ENCODE measurements at regions of chr20 and their contacts with region 1.

Region 1: GRCh38 chr20:10922941-10923340 is 249.1 kb upstream of the JAG1 start:
- DNase-seq: no peak
- ATAC-seq: no peak
- H3K4me3 ChIP-seq: no peak overlapping the region
- H3K27ac ChIP-seq: no peak overlapping the region
- H3K4me1 ChIP-seq: no peaks in the 10 kb centered on the region
- H3K27me3 ChIP-seq: no peaks in the 10 kb centered on the region
- CTCF ChIP-seq: no peak
- POLR2A ChIP-seq: no peak

Region 2: DNA sequence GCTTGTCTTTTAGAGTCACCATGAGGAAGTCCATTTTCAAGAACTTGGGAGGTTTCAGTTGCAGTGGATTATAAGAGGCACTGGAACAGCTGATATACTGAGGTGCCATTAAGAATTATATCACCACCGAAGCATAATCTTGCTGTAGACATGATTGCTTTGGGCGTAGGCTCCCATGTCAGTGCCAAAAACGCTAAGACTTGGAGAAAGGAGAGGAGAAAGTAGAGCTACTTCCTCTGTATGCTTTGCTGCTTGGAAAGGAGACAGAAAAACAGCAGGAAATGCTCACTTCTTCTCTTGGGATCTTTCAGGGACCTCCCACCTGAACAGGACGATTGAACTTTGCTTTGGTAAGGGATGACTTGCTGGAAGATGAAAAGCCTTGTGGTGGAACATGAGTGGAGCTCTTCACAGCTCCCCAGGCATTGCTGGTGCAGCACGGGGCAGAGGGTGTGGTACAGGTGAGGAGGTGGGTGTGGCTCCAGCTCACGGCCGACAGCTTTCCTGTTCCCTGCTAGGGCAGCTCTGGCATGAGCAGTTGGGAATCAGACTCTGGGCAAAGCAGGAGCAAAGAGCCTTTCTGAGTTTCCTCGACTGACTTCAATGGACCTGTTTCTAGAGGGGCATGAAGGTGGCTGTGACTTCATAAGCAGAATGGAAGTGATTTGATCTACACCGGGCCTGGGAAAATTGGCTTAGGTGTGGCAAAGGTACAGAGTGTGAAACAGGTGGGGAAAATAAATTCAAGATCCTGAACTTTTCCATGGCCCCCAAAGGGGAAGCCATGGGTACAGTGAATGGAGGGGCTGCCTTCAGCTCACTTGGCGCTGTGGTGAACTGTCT is 58.6 kb before region 1 on chr20:
- in situ Hi-C with region 1: loop called in 1 of 4 experiments (anchors 10 kb)
- intact Hi-C with region 1: no loop called
- DNase-seq: no peak
- ATAC-seq: peak; percentile 33 to 49
- H3K4me3 ChIP-seq: peak overlapping the region in 1 of 4 donors; percentile 29
- H3K27ac ChIP-seq: peak overlapping the region; percentile 25 to 60 (median 31)
- H3K4me1 ChIP-seq: peaks cover 8 to 11% of the 10 kb centered on the region in 2 donors
- H3K27me3 ChIP-seq: no peaks in the 10 kb centered on the region
- CTCF ChIP-seq: no peak
- POLR2A ChIP-seq: no peak

Measured in gastrocnemius medialis (tissue), 4 donors.